ENCODE measurements at regions of chr4 and their contacts with region 1.

Region 1: GRCh38 chr4:161869511-161869910 is 294.3 kb downstream of the FSTL5 start:
- DNase-seq: no peak
- H3K4me3 ChIP-seq: no peak overlapping the region
- H3K27ac ChIP-seq: no peak overlapping the region
- H3K4me1 ChIP-seq: no peaks in the 10 kb centered on the region
- H3K27me3 ChIP-seq: no peaks in the 10 kb centered on the region
- CTCF ChIP-seq: no peak
- POLR2A ChIP-seq: no peak

Region 2: GRCh38 chr4:161813889-161814288 is 55.6 kb before region 1 on chr4:
- intact Hi-C with region 1: loop called (anchors 2 kb)
- DNase-seq: no peak
- H3K4me3 ChIP-seq: no peak overlapping the region
- H3K27ac ChIP-seq: no peak overlapping the region
- H3K4me1 ChIP-seq: no peaks in the 10 kb centered on the region
- H3K27me3 ChIP-seq: no peaks in the 10 kb centered on the region
- CTCF ChIP-seq: no peak
- POLR2A ChIP-seq: no peak

Region 3: DNA sequence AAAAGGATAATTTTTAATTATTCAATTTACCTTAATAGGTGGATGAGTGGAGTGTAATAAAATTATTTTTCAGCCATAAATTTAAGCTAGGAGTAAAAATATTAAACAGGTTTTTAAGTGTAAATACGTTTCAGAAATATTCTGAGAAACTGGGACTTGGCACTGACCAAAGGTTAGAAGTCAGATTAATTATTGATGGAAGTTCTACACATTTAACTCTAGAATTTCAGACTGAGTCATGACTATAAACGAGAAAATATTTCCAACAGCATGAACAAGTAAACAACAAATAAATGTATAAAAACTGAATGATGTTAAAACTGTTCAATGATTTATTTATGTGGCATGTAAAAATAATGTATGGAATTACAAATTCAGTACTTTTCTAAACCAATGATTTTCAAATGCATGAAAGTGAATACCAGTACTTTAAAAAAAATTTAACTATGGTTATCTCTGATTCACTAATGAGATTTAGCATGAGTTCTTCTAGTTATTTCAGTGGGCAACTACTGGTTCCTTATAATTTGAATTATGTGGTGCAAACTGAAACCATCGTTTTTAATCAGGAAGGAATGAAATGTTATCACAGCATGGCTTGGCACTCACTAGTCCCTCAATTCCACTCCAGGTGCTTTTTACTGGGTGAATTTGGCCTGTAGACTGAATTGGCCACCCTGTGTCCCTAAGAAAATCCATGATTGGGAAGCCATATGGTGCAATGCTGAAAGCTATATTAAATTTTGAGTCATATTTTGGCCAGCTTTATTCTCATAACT is 50.1 kb after region 1 on chr4:
- intact Hi-C with region 1: no loop called
- DNase-seq: no peak
- H3K4me3 ChIP-seq: no peak overlapping the region
- H3K27ac ChIP-seq: no peak overlapping the region
- H3K4me1 ChIP-seq: no peaks in the 10 kb centered on the region
- H3K27me3 ChIP-seq: no peaks in the 10 kb centered on the region
- CTCF ChIP-seq: no peak
- POLR2A ChIP-seq: no peak